Sciatic nerve (tissue), 2 donors: ENCODE measurements at regions of chr2 and their contacts with region 1.

Region 1: DNA sequence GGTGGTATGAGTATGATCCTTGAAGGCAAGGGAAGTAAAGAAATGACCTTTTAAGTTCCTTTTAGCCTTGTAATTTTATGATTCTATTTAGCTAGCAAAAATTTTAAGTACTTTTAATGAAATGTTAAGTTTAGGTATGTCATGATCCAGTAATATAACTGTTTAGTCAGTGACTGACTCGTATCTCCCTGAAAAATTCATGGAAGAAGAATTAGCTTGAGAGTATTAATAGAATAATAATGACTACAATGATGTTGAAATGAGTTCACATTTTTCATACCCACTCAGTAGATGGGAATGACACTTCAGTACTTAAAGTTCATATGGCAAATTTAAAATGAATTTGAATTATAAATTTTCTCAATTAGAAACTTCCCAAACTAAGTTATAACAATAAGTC is 14.6 kb downstream of the RAB3GAP1 start:
- DNase-seq: no peak
- ATAC-seq: no peak

Region 2: DNA sequence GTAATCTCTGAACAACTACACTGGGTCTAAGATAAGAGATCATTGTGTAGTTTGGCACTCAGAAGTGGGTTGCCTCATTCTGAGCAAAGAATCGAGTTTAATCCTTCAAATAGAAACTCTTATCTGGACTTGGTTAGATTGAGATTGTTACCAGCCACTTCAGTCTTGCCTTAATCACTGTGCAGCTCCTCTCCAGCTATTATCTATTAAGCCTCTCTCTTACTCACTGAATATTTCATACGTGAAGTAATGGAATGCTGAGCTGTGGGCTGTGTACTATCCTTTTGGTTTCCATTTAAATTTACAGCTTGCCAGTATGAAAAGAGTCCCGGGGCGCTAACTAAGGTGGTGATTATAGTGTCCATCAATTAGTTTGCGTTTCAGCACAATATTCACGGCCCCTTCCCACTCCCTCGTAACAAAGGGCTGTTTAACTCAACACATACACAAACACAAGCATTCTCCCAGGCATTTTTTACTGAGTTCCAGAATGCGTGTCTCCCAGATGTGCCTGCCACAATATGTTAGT is 1432.8 kb before region 1 on chr2:
- intact Hi-C with region 1: no loop called
- DNase-seq: no peak
- ATAC-seq: peak; percentile 89

Region 3: DNA sequence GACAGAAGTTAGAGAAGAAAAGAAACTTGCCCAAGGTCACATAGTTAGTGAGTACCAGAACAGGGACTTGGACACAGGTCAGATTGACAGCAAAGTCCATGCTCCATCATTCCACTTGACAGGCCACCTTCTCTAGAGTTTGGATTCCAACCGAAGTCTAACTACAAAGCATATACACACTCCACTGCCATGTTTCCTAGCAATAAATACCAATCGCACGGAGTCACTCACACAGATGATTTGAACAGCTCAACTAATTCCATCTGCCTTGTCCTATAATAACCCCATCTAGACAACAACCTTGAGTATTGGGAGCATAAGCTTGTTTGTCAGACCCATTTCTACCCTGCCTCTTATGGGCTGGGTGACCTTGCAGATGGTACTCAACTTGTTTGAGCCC is 1147.4 kb before region 1 on chr2:
- intact Hi-C with region 1: loop called (anchors 5 kb)
- DNase-seq: no peak
- ATAC-seq: no peak

Region 4: GRCh38 chr2:134819334-134819733 is 247.4 kb before region 1 on chr2:
- intact Hi-C with region 1: no loop called
- DNase-seq: no peak
- ATAC-seq: no peak